GM13976 (cell line): ENCODE measurements at regions of chr4 and their contacts with region 1.

Region 1: GRCh38 chr4:173415885-173416653 is 17.2 kb upstream of the SCRG1 start:
- DNase-seq: no peak
- CTCF ChIP-seq: no peak

Region 2: DNA sequence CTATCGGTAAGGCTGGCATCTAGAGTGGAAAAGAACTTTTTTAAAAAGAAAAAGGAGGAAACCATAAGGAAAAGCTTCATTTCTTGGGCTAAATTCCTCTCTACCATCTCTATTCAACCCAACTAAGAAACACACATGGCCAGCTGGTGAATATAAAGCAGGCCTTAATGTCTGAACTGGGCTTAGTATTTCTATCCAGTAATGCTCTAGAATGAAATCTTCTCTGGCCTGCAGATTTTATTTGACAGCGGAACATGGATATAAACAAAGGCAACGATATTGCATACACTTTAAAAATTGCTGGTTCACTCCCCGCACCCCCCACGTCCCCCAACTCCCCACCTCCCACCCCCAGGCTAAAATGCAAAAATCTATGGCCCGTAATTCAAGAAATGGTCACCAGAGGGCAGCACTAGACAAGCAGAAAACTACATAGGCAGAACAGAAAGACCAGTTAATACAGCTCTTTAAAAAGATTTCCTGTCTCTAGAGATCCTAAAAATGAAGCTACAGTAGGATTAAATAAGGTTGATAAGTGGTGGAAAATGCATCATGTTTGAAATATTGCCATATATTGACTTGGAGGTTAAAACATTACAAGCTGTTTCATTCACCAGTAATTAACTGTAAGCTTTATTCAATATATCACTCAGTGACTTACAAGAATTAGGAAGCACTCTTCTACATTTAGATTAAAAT is 402.7 kb before region 1 on chr4:
- in situ Hi-C with region 1: loop called (anchors 10 kb)
- DNase-seq: peak; percentile 61
- CTCF ChIP-seq: peak; percentile 56

Region 3: GRCh38 chr4:173328236-173328901 is 87.7 kb before region 1 on chr4:
- in situ Hi-C with region 1: loop called (anchors 5 kb)
- DNase-seq: no peak
- CTCF ChIP-seq: no peak

Region 4: GRCh38 chr4:173547889-173548288 is 131.8 kb after region 1 on chr4:
- in situ Hi-C with region 1: no loop called
- DNase-seq: no peak
- CTCF ChIP-seq: no peak